AG04449 (cell line): ENCODE measurements at regions of chr22 and their contacts with region 1.

Region 1: DNA sequence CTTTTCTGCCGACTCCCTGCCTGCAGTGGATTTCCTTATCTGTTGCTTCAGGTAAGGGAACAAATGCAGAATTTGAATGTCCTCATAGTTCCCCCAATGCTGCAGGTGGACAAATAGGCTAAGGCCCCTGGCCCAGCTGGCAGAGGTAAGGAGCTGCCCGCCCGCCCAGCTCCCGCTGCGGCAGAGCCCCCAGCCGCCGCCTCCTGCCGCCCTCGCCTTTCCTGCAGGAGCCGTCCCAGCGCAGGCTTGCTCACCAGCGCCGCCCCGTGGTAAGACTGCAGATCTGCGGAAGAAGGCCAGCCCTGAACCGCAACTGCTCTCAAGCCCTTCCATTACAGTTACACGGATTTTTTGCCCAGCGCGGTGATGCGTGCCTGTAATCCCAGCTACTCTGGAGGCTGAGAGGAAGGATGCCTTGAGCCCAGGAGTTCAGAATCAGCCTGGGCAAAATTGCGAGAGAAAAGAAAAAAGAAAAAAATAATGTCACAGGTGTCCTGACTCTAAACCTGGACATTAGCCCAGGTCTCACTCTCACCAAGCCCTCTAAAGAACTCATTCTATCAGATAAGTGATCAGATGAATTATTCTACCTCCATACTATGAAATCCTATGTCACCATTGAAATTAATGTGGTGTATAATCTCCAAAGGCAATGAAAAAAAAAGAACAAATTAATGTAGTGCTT is 51.2 kb upstream of the EMID1 start:
- DNase-seq: no peak
- H3K4me3 ChIP-seq: no peak overlapping the region
- CTCF ChIP-seq: peak; percentile 98

Region 2: DNA sequence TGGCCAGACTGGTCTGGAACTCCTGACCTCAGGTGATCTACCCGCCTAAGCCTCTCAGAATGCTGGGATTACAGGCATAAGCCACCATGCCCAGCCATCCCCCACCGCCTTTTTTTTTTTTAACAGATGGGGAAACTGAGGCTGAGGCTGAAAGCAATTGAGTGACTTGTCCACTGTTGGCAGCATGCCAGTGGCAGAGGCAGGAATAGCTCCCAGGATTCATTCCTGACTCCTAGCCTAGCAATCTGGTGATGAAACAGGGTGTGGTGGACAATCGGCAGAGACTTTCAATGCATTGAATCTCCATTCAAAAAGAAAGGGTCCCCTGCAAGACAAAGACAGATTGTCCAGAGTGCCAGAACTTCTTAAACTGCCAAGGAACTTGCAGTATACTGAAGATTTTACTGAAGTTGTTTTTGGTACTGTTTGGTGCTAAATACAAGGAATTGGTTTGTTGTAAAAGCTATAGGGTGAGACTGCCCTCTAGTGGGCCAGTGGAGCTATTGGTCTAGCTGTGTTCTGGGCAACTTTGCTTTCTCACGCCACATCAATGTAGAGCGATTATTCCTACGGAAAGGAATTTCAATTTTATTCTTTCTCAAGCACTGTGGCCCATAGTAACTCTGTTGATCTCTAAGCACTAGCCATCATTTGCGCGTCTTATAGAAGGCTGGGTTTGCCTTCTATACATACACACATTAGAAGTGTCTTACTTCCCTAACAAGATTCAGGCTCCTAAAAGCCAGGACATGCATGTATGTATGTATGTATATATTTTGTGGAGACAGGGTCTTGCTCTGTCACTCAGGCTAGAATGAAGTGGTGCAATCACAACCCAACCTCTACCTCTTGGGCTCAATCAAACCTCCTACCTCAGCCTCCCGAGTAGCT is 113.9 kb before region 1 on chr22:
- CTCF ChIA-PET with region 1: interaction called, 44 read pairs
- POLR2A ChIA-PET with region 1: no interaction called
- DNase-seq: peak; percentile 74
- H3K4me3 ChIP-seq: no peak overlapping the region
- CTCF ChIP-seq: peak; percentile 82

Region 3: DNA sequence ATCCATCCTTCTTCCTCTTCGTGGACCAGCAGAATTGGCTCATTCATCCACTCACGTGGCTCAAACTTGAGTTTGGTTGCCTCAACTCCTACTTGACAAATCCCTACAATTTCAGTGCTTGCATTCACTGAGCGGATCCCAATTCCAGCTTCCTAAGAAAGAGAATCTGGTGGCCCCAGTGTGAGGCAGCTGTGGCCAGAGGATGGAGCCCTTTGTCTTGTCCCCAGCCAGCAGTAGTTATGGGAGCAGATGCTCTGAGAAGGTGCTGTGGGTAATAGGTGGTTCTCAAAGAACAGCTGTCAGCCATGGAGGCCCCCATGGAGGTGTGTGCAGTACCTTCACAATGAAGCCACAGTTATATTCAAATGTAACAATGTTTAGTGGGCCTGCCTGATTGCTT is 42.4 kb before region 1 on chr22:
- CTCF ChIA-PET with region 1: interaction called, 11 read pairs
- POLR2A ChIA-PET with region 1: no interaction called
- DNase-seq: no peak
- H3K4me3 ChIP-seq: no peak overlapping the region
- CTCF ChIP-seq: no peak

Region 4: DNA sequence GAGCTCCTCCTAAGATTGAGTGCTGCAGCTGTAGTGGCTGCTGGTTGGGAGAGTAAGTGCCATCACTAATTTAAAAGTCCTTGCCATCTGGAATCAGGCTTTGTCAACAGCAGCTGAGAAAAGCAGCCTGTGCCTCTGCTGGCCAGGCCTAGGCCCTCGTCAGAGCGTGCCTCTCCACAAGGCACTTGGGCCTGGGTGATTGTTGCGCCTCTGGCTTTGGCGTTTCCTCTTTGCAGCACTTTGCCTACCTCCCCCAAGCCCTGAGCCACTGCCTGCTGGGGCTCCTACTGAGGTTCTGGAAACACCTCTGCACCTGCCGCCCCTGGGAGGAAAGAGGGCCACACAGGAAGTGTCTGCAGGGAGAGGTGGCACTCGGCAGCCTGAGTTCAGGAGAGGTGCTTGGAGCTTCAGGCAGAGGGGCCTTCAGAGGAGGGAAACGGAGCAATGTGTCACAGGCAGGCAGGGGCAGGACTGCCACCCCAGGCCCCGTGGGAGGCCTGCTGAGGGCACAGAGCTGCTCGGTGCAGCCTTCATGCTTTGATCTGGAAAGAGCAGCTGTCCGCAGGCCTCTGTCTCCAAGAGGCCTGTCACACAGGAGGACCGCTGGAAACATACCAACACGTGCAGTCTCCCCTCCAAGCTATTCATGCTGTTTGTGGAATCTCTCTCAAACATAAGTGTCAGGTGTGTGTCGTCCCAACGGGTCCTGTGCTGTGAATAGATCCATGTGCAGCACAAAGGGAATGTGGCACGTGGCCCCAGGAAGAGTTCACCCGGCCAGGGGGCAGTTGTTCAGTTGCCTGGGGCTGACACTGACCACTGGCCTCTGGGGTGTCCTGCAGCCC is 10.3 kb before region 1 on chr22:
- CTCF ChIA-PET with region 1: interaction called, 69 read pairs
- POLR2A ChIA-PET with region 1: no interaction called
- DNase-seq: no peak
- H3K4me3 ChIP-seq: no peak overlapping the region
- CTCF ChIP-seq: no peak

Region 5: GRCh38 chr22:29175312-29175835 is 20.9 kb after region 1 on chr22:
- CTCF ChIA-PET with region 1: interaction called, 10 read pairs
- POLR2A ChIA-PET with region 1: no interaction called
- DNase-seq: no peak
- H3K4me3 ChIP-seq: no peak overlapping the region
- CTCF ChIP-seq: no peak

Region 6: GRCh38 chr22:29245637-29246385 is 91.3 kb after region 1 on chr22:
- CTCF ChIA-PET with region 1: interaction called, 12 read pairs
- POLR2A ChIA-PET with region 1: no interaction called
- DNase-seq: no peak
- H3K4me3 ChIP-seq: no peak overlapping the region
- CTCF ChIP-seq: peak; percentile 97

Region 7: DNA sequence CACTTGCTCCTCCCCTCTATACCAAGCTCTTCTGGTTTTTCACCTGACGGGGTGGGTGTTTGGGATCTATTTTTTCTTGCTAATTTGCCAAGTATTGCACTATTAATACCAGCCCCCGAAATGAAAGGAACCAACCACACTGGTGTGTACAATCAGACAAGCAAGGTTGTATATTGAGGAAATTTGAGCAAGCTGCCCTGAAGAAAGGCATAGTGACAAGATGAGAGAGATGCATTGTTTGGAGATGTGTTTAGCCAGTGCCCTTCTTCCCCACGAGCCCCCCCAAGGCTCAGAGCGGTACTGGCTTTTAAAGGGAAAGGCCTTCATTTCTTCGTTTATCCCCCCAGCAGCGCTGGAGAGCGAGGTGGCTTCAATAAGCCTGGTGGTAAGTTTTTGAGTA is 136.7 kb after region 1 on chr22:
- CTCF ChIA-PET with region 1: no interaction called
- POLR2A ChIA-PET with region 1: no interaction called
- DNase-seq: no peak
- H3K4me3 ChIP-seq: no peak overlapping the region
- CTCF ChIP-seq: no peak